ENCODE measurements at regions of chr2 and their contacts with region 1.

Region 1: DNA sequence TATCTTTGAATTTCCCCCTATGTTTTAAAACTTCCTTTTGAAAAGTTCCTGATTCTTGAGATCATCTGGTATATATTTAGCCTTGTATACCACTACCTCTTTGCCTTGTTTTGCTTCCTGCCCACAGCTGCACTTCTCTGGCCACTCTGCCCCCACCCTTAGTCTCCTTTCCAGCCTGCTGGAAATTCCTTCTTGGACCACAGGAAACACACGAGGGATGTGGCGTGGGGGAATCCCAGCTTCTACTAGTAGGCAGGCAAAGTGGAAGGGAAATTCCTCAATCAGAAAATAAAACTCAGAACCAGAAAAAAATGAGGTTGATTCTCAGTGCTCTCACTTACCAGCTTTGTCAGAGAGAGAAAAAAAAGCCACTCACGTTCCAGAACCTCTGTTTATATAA is 13.4 kb downstream of the IL18RAP start:
- DNase-seq: peak; percentile 38
- ATAC-seq: no peak
- H3K4me3 Mint-ChIP-seq: no peak overlapping the region
- H3K27ac Mint-ChIP-seq: peak overlapping the region; percentile 71
- H3K4me1 Mint-ChIP-seq: peaks cover 30% of the 10 kb centered on the region
- H3K27me3 Mint-ChIP-seq: no peaks in the 10 kb centered on the region

Region 2: GRCh38 chr2:101710471-101711318 is 725.6 kb before region 1 on chr2:
- CTCF ChIA-PET with region 1: no interaction called
- POLR2A ChIA-PET with region 1: no interaction called
- intact Hi-C with region 1: loop called in 1 of 2 experiments (anchors 10 kb)
- DNase-seq: no peak
- ATAC-seq: peak; percentile 88
- H3K4me3 Mint-ChIP-seq: peak overlapping the region; percentile 19
- H3K27ac Mint-ChIP-seq: peak overlapping the region; percentile 79
- H3K4me1 Mint-ChIP-seq: peaks cover 78% of the 10 kb centered on the region
- H3K27me3 Mint-ChIP-seq: no peaks in the 10 kb centered on the region

Region 3: GRCh38 chr2:101806123-101806522 is 630.2 kb before region 1 on chr2:
- CTCF ChIA-PET with region 1: no interaction called
- POLR2A ChIA-PET with region 1: no interaction called
- intact Hi-C with region 1: no loop called
- DNase-seq: peak; percentile 58
- ATAC-seq: peak; percentile 79
- H3K4me3 Mint-ChIP-seq: no peak overlapping the region
- H3K27ac Mint-ChIP-seq: peak overlapping the region; percentile 75
- H3K4me1 Mint-ChIP-seq: peaks cover 67% of the 10 kb centered on the region
- H3K27me3 Mint-ChIP-seq: no peaks in the 10 kb centered on the region

Region 4: DNA sequence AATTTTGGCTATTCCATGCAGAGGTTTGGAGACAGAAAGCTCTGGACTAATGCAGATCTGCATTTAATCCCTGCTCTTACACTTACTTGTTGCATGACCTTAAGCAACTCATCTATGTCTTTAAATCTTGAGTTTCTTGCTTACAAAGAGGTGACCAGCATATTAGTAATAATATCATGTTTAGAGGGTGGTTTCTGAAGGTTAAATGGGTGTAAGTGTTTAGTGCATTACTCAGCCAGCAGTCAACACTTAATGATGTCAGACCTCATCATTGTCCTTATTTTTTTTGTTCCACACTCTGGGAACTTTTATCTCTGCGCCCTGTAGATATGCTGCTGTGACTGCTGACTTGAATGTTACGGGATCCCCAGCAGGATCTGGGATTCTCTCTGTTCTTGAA is 123.3 kb before region 1 on chr2:
- CTCF ChIA-PET with region 1: no interaction called
- POLR2A ChIA-PET with region 1: no interaction called
- intact Hi-C with region 1: no loop called
- DNase-seq: no peak
- ATAC-seq: peak; percentile 23
- H3K4me3 Mint-ChIP-seq: no peak overlapping the region
- H3K27ac Mint-ChIP-seq: no peak overlapping the region
- H3K4me1 Mint-ChIP-seq: no peaks in the 10 kb centered on the region
- H3K27me3 Mint-ChIP-seq: peaks cover 4% of the 10 kb centered on the region